Dorsolateral prefrontal cortex (tissue), 120 donors: ENCODE measurements at regions of chr2 and their contacts with region 1.

Region 1: GRCh38 chr2:73239776-73240175 is 5.7 kb downstream of the CCT7 start:
- DNase-seq: no peak
- H3K4me3 ChIP-seq: peak overlapping the region in 1 of 59 donors; percentile 11
- H3K27ac ChIP-seq: peak overlapping the region in 29 of 59 donors; percentile 1 to 92 (median 60)
- H3K27me3 ChIP-seq: no peaks in the 10 kb centered on the region
- CTCF ChIP-seq: no peak

Region 2: DNA sequence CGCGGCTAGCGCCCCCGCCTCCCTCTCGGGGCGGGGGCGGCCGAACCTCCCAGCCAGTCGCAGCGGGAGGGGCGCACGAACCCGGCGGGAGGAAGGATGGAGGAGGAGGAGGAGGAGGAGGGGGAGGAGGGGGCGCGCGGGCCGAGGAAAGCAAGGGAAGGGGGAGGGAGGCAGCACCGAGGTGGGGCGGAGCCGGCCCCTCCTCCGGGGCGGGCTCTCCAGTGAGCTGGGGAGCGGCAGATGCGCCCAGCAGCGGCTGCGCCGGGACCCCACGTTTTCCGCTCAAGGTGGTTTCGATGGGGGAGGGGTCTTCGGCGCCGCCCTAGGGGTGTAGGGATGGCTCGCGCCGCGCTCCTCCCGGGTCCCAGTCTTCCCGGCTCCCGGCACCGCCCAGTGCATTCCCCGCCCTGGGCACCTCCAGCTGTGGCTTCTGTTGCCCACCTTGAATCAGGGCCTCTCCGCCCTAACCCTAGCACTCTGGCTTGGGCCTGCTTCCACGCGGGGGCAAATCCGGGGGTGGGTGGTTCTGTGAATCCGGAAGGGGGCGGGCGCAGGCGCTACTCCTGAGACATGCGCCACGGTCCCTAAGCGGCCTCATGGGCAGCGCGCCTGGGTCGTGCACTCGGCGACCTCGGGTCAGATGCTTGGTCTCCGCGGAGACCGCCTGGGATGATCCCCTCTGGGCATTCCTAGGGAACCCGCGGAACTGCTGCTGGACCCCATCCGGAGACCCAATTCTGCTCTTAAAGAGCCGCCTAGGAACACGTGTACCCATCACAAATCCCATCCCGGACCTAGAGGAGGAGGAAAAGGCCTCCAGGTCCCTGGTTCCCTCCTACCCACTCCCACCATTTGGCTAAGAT is 44.8 kb after region 1 on chr2 and contains the start of gene FBXO41:
- intact Hi-C with region 1: loop called in 1 of 2 experiments (anchors 5 kb)
- DNase-seq: peak in 5 of 10 donors; percentile 61 to 72 (median 69)
- H3K4me3 ChIP-seq: peak within 1 kb of the TSS; percentile 43 to 81 (median 70)
- H3K27ac ChIP-seq: peak within 1 kb of the TSS in 54 of 59 donors; percentile 30 to 93 (median 71)
- H3K27me3 ChIP-seq: peaks cover 0 to 49% (median 0%) of the 10 kb centered on the region in 45 donors
- CTCF ChIP-seq: no peak
- total RNA-seq, gene FBXO41: 33.6 to 164 (median 112) TPM

Region 3: DNA sequence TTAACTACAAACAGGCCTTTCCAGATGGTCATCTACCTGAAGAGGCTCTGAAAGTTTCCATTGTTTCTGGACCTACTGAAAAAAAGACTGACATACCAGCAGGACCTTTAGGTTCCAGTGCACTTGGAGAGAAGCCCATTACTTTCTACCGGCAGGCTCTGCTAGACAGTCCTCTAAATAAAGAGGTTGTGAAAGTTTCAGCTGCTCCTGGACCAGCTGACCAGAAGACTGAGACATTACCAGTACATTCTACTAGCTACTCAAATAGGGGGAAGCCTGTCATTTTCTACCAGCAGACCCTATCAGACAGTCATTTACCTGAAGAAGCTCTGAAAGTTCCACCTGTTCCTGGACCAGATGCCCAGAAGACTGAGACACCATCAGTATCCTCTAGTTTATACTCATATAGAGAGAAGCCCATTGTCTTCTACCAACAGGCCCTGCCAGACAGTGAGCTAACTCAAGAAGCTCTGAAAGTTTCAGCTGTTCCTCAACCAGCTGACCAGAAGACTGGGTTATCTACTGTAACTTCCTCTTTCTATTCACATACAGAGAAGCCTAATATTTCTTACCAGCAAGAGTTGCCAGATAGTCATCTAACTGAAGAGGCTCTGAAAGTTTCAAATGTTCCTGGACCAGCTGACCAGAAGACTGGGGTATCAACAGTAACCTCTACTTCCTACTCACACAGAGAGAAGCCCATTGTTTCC is 211.6 kb after region 1 on chr2:
- intact Hi-C with region 1: no loop called
- DNase-seq: no peak
- H3K4me3 ChIP-seq: no peak overlapping the region
- H3K27ac ChIP-seq: peak overlapping the region in 1 of 59 donors; percentile 3
- H3K27me3 ChIP-seq: no peaks in the 10 kb centered on the region
- CTCF ChIP-seq: no peak

Region 4: DNA sequence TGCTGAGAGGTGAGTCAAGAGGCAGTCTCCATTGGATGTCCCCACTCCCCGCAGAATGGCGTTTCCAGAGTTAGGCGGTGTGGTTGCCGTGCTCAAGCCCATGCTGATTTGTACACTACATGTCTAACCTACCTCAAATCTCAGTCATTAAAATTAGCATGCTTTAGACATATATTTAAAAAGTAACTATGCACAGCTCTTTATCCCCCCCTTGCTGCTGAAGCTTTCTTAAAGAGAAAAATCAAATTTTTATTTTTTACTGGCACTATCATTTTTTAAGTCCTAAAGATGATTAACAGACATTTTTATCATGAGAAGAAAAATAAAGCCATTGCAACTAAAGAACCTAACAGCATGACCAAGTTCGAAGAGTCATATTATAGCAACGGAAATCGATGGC is 865.1 kb after region 1 on chr2:
- intact Hi-C with region 1: no loop called
- DNase-seq: no peak
- H3K4me3 ChIP-seq: no peak overlapping the region
- H3K27ac ChIP-seq: peak overlapping the region in 1 of 59 donors; percentile 14
- H3K27me3 ChIP-seq: no peaks in the 10 kb centered on the region
- CTCF ChIP-seq: peak in 49 of 56 donors; percentile 8 to 64 (median 38)